ENCODE measurements at regions of chr20 and their contacts with region 1.

Region 1: GRCh38 chr20:35741892-35742740 is at the start of gene RBM39:
- DNase-seq: peak; percentile 99 to 100
- ATAC-seq: peak; percentile 99
- H3K4me3 ChIP-seq: peak within 1 kb of the TSS; percentile 85 to 96
- H3K27ac ChIP-seq: peak within 1 kb of the TSS; percentile 94 to 99
- H3K4me1 ChIP-seq: peaks cover 0 to 4% of the 10 kb centered on the region in 2 donors
- H3K27me3 ChIP-seq: no peaks in the 10 kb centered on the region
- total RNA-seq, gene RBM39: 293 to 383 TPM

Region 2: GRCh38 chr20:34876162-34877001 is 865.7 kb before region 1 on chr20 and contains the start of gene ACSS2:
- intact Hi-C with region 1: no loop called
- DNase-seq: peak; percentile 100
- ATAC-seq: peak; percentile 94
- H3K4me3 ChIP-seq: peak within 1 kb of the TSS; percentile 64 to 98
- H3K27ac ChIP-seq: peak within 1 kb of the TSS; percentile 52 to 83
- H3K4me1 ChIP-seq: peaks cover 0 to 4% of the 10 kb centered on the region in 2 donors
- H3K27me3 ChIP-seq: no peaks in the 10 kb centered on the region
- total RNA-seq, gene ACSS2: 64.8 to 87.4 TPM

Region 3: DNA sequence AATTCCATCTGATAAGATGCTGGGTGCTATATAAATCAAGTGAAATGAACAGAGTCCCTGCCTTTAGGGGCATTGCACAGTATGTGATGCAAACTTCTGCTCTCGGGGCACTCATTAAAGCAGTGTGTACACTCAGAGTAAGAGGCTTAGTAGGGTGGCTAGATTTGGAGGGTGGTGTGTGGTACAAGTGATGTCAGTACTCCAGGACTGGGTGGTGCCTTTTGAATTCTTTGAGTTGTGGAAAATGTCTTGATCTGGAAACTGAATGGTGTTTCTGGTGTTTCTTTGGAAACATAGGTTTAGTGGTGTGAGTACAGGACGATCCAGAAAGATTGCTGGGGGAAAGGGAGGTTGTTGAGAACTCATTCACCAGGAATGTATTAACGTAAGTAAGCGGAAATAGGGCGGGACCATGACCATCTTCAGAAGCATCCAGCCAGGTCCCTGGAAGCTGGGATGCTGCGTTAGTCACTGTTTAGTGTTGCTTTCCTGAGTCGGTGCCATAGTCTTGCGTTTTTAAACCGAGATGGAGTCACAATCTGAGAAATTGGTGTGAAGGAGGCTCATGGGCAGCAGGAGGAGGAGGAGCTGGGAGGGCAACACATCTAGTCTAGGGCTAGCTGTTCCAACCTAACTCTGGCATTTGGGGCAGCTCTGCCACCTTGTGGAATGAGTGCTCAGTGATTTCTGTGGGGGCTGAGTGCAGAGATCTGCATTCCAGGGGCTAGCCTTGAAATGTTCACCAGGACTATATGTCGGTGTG is 141.8 kb after region 1 on chr20:
- intact Hi-C with region 1: loop called (anchors 1 to 2 kb)
- DNase-seq: peak; percentile 82 to 89
- ATAC-seq: peak; percentile 94
- H3K4me3 ChIP-seq: no peak overlapping the region
- H3K27ac ChIP-seq: peak overlapping the region; percentile 61 to 95
- H3K4me1 ChIP-seq: no peaks in the 10 kb centered on the region
- H3K27me3 ChIP-seq: no peaks in the 10 kb centered on the region

Measured in aorta (tissue), 5 donors.